ENCODE measurements at regions of chr12 and their contacts with region 1.

Region 1: DNA sequence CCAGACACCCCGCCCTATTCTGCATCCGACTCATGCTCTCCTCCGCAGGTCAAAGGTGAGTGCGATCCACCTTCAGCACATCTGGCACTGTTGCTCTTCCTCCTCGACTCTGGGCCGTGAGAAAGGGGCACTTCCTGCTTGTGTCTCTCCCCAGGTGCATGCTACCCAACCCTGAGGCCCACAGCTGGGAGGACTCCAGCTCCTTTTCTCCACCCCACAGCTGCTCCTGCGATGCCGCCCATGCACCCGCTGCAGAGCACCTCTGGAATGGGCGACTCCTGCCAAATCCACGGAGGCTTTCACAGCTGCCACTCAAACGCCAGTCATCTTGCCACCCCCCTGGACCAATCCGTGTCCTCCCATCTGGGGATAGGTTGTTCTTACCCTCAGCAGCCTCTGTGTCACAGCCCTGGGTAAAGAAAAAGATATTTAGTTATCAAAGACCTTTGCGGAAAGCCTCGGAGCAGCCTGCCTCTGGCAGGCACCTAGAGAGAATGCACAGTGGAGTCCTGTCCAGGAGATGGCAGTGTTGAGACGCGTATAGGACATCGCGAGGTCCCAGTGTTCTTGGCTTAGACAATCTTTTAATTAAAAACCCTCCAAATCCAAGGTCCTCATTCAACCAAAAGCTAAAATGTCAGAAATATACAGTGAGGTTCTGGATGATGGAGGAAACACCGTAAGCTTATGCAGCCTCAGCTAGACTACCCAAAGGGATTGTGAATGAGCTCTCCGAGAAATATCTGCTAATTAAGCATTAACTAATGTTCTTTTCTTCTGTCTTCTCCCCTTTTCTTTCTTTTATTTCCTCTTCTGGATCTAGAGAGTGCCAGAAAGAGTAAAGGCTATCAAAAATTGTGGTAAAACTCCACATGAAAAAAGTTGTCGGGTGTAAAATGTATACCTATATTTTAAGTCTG is 54.3 kb downstream of the MYRFL start:
- ATAC-seq: peak; percentile 86 to 99 (median 96)
- H3K4me3 ChIP-seq: no peak overlapping the region
- H3K27ac ChIP-seq: no peak overlapping the region
- H3K4me1 ChIP-seq: no peaks in the 10 kb centered on the region

Region 2: DNA sequence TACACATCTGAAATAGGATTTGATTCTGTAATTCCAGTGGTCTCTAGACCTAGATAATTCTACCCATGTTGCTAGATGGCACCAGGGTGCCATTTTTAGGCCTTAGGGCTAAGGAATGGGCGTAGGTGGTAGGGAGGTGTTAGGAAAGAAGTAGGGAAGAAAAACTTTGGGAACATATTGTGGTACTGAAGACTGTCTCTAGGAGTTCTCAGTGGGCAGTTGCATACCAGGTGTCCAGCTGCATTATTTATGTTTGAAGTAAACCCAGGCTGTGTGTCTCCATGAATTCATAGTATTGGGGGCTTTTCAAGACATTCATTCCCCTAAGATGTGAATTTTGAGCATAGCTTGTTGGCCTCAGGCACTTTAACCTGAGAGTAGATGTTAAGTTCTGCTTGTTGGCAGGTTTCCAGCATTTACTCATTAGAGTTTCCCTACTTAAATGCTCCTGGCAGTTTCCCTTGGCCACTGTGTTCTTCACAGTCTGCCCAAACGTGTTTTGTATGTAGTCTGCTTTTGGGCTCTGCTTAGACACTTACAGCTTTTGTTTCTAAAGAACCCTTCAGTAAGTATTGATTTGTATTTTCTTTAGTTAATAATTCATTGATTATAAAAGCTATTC is 325.6 kb before region 1 on chr12:
- in situ Hi-C with region 1: no loop called
- ATAC-seq: peak in 1 of 8 experiments; percentile 64
- H3K4me3 ChIP-seq: no peak overlapping the region
- H3K27ac ChIP-seq: no peak overlapping the region
- H3K4me1 ChIP-seq: no peaks in the 10 kb centered on the region

Region 3: GRCh38 chr12:70365648-70366518 is 486.6 kb after region 1 on chr12 and contains the start of gene KCNMB4:
- in situ Hi-C with region 1: loop called in 1 of 9 experiments (anchors 25 kb)
- ATAC-seq: peak; percentile 66 to 91 (median 89)
- H3K4me3 ChIP-seq: peak within 1 kb of the TSS; percentile 65 to 98 (median 79)
- H3K27ac ChIP-seq: peak within 1 kb of the TSS; percentile 69 to 82
- H3K4me1 ChIP-seq: peaks cover 3 to 14% of the 10 kb centered on the region in 2 donors
- total RNA-seq, gene KCNMB4: 0.20 to 13.5 (median 7.4) TPM

Region 4: GRCh38 chr12:70576346-70577282 is 697.3 kb after region 1 on chr12:
- in situ Hi-C with region 1: loop called (anchors 10 to 25 kb)
- ATAC-seq: peak; percentile 61 to 89 (median 82)
- H3K4me3 ChIP-seq: no peak overlapping the region
- H3K27ac ChIP-seq: no peak overlapping the region
- H3K4me1 ChIP-seq: peaks cover 0 to 2% of the 10 kb centered on the region in 2 donors

Region 5: GRCh38 chr12:70719672-70720420 is 840.5 kb after region 1 on chr12:
- in situ Hi-C with region 1: loop called in 5 of 9 experiments (anchors 10 to 25 kb)
- ATAC-seq: peak; percentile 32 to 92 (median 80)
- H3K4me3 ChIP-seq: peak overlapping the region in 2 of 5 donors; percentile 15 to 16
- H3K27ac ChIP-seq: no peak overlapping the region
- H3K4me1 ChIP-seq: no peaks in the 10 kb centered on the region

Region 6: DNA sequence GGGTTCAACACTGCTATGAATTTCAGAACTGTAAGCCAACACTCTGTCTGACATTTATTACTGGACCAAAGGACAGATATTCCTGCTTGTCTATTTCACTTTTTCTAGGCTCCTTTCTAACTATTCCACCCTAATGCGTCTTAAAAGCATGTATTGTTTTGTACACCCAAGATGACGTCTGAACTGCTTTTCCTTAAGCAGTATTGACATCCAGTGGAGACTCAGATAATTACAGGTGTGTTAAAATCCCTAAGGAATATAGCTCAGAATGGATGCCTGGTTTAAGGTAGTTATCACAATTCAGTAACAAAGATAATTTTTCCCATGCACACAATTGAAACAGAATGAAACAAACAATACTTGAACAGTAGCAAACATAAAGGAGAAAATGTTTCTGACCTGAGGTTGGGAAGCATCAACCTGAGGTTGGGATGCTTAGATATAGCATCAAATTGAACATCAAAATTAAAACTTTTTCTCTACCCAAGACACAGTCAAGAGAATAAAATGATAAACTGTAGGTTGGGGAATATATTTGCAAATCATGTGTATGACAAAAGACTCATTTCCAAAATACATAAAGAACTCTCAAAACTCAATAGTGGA is 1135.0 kb after region 1 on chr12:
- in situ Hi-C with region 1: loop called in 1 of 9 experiments (anchors 25 kb)
- ATAC-seq: peak in 5 of 8 experiments; percentile 30 to 76 (median 62)
- H3K4me3 ChIP-seq: no peak overlapping the region
- H3K27ac ChIP-seq: no peak overlapping the region
- H3K4me1 ChIP-seq: no peaks in the 10 kb centered on the region

Measured in motor neuron (in vitro differentiated cells).